MCF 10A (cell line): ENCODE measurements at regions of chr10 and their contacts with region 1.

Region 1: GRCh38 chr10:50224330-50224952 is 26.9 kb downstream of the ASAH2 start:
- DNase-seq: peak; percentile 84
- H3K4me3 Mint-ChIP-seq: no peak overlapping the region
- H3K27ac Mint-ChIP-seq: no peak overlapping the region
- H3K4me1 Mint-ChIP-seq: no peaks in the 10 kb centered on the region
- H3K27me3 Mint-ChIP-seq: peaks cover 46% of the 10 kb centered on the region
- CTCF ChIP-seq: peak; percentile 65

Region 2: GRCh38 chr10:50210876-50211275 is 13.6 kb before region 1 on chr10:
- CTCF ChIA-PET with region 1: interaction called, 16 read pairs
- POLR2A ChIA-PET with region 1: no interaction called
- intact Hi-C with region 1: no loop called
- DNase-seq: no peak
- H3K4me3 Mint-ChIP-seq: no peak overlapping the region
- H3K27ac Mint-ChIP-seq: no peak overlapping the region
- H3K4me1 Mint-ChIP-seq: no peaks in the 10 kb centered on the region
- H3K27me3 Mint-ChIP-seq: peaks cover 53% of the 10 kb centered on the region
- CTCF ChIP-seq: no peak

Region 3: DNA sequence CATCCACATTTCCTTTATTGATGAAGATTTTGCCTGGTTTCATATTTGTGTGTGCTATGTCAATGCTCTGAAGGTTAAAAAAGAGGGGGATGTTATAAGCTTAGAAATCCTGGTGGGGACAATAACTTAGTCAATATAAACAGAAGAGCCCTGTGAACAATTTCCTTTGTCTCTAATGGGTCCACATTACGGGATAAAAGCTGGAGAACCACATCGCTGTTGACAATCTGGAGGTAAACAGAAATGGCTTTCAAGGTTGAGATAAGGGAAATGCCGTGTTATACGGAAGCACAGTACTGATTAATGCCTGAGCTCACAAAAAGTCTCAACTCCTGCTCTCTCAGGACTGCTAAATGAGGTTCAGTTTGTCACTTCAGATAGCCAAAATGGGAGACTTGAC is 10.0 kb after region 1 on chr10:
- CTCF ChIA-PET with region 1: interaction called, 22 read pairs
- POLR2A ChIA-PET with region 1: no interaction called
- intact Hi-C with region 1: no loop called
- DNase-seq: no peak
- H3K4me3 Mint-ChIP-seq: no peak overlapping the region
- H3K27ac Mint-ChIP-seq: no peak overlapping the region
- H3K4me1 Mint-ChIP-seq: no peaks in the 10 kb centered on the region
- H3K27me3 Mint-ChIP-seq: peaks cover 77% of the 10 kb centered on the region
- CTCF ChIP-seq: no peak